Activated CD4-positive, alpha-beta memory T cell treated with anti-CD3 and anti-CD28 coated beads for 36 hours (primary cell): ENCODE measurements at regions of chr7 and their contacts with region 1.

Region 1: DNA sequence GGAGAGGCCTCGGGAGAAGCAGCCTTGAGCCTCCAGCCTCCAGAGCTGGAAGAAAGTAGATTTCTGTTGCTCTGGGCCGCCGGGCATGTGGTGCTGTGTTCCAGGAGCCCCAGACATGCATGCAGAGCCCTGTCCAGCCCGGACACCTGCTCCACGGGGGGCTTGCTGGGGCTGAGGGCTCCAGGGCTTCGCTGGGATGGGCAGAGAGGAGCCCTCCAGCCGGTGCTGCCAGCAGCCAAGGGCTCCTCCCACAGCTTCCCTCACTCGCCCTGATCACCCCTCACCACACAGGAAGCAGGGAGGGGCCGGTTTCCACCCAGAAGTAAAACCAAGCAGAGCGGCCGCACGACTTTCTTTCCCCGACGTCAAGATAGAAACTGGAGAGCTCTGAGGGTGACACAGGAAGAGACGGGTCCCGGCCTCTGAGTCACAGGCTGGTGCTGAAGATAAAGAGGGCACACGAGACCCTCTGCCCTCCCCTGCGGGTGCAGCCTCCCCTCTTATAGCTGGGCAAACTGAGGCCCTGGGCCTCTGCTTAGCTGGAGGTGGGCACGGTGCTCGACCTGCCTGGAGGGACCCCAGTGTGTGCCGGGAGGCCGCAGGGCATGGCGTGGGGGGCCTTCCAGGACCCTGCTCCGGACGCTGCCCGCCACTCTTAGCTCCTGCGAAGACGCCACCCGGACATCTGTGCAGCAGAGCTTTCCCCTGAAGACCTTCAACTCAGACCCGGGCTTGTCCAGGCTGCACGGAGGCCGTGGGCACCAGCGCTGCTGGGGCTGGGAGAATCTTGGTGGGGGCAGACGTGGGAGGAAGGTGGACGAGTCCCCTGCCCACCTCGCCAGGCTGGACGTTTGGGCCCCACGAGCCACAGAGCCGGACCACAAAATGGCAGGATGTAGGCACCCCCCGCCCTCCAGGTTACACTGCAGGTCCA is 31.1 kb downstream of the ADAP1 start:
- DNase-seq: peak; percentile 98
- H3K4me3 Mint-ChIP-seq: peak overlapping the region; percentile 71
- H3K27ac Mint-ChIP-seq: peak overlapping the region; percentile 92
- H3K4me1 Mint-ChIP-seq: peaks cover 39% of the 10 kb centered on the region
- H3K27me3 Mint-ChIP-seq: no peaks in the 10 kb centered on the region

Region 2: GRCh38 chr7:353746-354325 is 569.5 kb before region 1 on chr7:
- CTCF ChIA-PET with region 1: no interaction called
- POLR2A ChIA-PET with region 1: no interaction called
- intact Hi-C with region 1: loop called (anchors 5 kb)
- DNase-seq: no peak
- H3K4me3 Mint-ChIP-seq: no peak overlapping the region
- H3K27ac Mint-ChIP-seq: no peak overlapping the region
- H3K4me1 Mint-ChIP-seq: peaks cover 13% of the 10 kb centered on the region
- H3K27me3 Mint-ChIP-seq: no peaks in the 10 kb centered on the region

Region 3: GRCh38 chr7:831596-832166 is 91.7 kb before region 1 on chr7:
- CTCF ChIA-PET with region 1: no interaction called
- POLR2A ChIA-PET with region 1: no interaction called
- intact Hi-C with region 1: loop called (anchors 5 kb)
- DNase-seq: peak; percentile 36
- H3K4me3 Mint-ChIP-seq: peak overlapping the region; percentile 74
- H3K27ac Mint-ChIP-seq: peak overlapping the region; percentile 97
- H3K4me1 Mint-ChIP-seq: peaks cover 48% of the 10 kb centered on the region
- H3K27me3 Mint-ChIP-seq: no peaks in the 10 kb centered on the region

Region 4: DNA sequence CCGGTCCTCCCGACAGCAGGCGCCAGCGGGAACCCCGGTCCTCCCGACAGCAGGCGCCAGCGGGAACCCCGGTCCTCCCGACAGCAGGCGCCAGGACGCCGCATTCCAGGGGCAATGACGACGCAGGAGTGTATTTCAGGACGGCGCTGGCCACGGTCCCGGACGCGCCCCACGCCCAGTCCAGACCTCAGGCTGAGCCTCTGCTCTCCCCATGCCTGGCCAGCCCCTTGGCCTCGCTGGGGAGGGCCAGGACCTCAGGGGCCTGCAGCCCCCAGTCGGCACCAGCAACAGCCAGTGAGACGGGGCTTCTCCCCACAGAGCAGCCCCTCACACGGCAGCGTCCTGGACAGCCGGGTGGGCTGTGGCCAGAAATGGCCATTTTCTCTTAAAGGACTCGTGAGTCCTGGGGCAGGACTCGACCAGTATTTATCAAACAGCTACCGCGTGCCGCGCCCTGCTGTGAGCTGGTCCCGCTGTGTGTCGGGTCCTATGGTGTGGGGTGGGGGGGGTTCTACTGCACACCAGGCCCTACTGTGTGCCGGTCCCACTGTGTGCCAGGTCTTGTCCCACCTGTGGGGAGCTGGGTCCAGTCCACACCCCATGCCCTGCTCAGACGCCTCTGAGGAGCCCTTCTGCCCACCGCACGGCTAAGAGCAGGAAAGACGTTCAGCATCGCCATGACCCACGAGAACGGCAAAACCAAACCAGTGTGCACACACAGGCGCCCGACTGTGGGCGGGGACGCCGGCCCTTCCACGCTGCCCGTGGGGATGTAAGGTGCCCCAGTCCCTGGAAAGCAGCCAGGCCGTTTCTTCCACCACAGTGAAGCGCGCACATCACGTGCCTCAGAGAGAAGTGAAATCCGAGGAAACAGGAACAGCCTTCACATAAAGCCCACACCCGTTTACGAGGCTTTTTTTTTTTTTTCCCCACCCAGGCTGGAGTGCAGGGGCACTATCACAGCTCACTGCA is 13.7 kb before region 1 on chr7:
- CTCF ChIA-PET with region 1: interaction called, 17 read pairs
- POLR2A ChIA-PET with region 1: interaction called, 4 read pairs
- intact Hi-C with region 1: no loop called
- DNase-seq: no peak
- H3K4me3 Mint-ChIP-seq: peak overlapping the region; percentile 8
- H3K27ac Mint-ChIP-seq: no peak overlapping the region
- H3K4me1 Mint-ChIP-seq: peaks cover 10% of the 10 kb centered on the region
- H3K27me3 Mint-ChIP-seq: no peaks in the 10 kb centered on the region

Region 5: DNA sequence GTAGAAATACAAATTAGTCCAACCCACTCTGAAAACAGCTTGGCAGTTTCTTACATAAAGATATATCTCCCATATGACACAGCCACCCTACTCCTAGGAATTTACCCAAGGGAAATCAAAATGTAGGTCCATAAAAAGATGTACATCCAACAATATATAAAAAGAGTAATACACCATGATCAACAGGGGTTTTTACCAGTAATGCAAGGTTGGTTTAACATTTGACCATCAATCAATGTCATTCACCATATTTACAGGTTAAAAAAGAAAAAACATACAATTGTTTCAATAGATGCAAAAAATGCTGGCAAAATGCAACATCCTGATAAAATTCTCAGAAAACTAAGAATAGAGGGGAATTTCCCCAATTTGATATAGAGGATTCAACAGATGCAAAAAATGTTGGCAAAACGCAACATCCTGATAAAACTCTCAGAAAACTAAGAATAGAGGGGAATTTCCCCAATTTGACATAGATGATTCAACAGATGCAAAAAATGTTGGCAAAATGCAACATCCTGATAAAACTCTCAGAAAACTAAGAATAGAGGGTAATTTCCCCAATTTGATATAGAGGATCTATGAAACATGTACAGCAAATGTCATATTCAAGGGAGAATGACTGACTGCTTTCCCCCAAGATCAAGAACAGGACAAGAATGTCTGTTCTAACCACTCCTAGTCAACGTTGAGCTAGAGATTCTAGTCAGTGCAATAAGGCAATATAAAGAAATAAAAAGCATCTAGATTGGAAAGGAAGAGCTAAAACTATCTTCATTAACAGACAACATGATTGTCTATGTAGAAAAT is 17.4 kb after region 1 on chr7:
- CTCF ChIA-PET with region 1: no interaction called
- POLR2A ChIA-PET with region 1: interaction called, 6 read pairs
- intact Hi-C with region 1: loop called (anchors 1 kb)
- DNase-seq: no peak
- H3K4me3 Mint-ChIP-seq: no peak overlapping the region
- H3K27ac Mint-ChIP-seq: peak overlapping the region; percentile 46
- H3K4me1 Mint-ChIP-seq: peaks cover 37% of the 10 kb centered on the region
- H3K27me3 Mint-ChIP-seq: peaks cover 2% of the 10 kb centered on the region

Region 6: DNA sequence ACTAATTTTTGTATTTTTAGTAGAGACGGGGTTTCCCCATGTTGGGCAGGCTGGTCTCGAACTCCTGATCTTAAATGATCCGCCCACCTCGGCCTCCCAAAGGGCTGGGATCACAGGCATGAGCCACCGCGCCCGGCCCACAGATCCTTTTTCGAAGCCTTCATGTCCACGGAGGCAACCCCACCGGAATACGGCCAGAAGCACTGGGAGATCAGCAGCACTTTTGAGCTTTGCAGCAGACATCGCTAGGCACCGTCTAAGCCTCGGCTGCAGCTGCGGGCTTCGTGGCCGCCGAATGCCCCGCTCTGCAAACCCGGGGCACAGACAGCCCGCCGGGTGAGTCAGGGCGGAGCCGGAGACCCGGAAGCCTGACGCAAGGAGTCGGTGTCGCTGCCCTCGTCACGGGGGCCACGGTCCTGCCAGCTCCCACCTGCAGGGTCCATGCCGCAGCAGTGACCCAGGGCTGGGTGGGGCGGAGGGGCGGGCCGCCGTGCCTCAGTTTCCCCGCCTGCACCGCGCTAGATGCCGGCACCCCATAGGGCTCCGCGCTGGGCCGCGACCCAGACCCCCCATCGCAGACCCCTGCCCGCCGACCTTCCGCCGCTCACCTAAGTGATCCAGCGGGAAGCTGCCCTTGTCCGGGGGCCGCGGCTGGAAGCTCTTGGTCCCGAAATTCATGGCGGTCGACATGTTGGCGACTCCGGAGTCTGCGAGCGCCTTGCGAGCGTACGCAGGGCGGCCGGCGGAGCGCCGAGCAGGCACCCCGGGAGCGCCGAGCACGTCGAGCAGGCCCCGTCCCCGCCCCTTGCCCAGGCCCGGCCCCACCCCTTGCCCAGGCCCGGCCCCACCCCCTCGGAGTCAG is 51.7 kb after region 1 on chr7 and contains the start of gene COX19:
- CTCF ChIA-PET with region 1: no interaction called
- POLR2A ChIA-PET with region 1: interaction called, 19 read pairs
- intact Hi-C with region 1: no loop called
- DNase-seq: peak; percentile 94
- H3K4me3 Mint-ChIP-seq: peak within 1 kb of the TSS; percentile 95
- H3K27ac Mint-ChIP-seq: peak within 1 kb of the TSS; percentile 90
- H3K4me1 Mint-ChIP-seq: peaks cover 27% of the 10 kb centered on the region
- H3K27me3 Mint-ChIP-seq: no peaks in the 10 kb centered on the region
- total RNA-seq, gene COX19: 14.1 to 15.6 TPM